Transverse colon (tissue), 4 donors: ENCODE measurements at regions of chr6 and their contacts with region 1.

Region 1: DNA sequence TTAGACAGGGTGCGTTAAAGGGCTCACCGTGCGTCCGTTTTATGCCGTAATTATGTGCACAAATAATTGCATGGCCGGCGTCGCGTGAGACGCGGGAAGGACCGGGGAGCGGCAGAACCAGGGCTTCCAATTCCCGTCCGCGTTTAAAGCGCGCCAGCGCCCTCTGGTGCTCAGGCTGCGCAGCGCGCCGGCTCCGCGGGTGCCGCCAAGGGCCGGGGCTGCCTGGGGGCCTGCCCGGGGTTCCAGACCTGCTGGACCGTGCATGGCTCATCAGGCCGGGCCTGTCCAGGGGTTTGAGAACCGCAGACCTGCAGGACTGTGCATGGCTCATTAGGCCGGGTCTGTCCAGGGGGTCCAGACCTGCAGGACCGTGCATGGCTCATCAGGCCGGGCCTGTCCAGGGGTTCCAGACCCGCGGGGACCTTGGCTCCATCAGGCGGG is 369.0 kb downstream of the THBS2 start:
- DNase-seq: peak; percentile 76
- H3K4me3 ChIP-seq: no peak overlapping the region
- H3K27ac ChIP-seq: no peak overlapping the region
- H3K4me1 ChIP-seq: no peaks in the 10 kb centered on the region
- H3K27me3 ChIP-seq: no peaks in the 10 kb centered on the region
- CTCF ChIP-seq: peak; percentile 87 to 97 (median 94)
- EP300 ChIP-seq: no peak
- POLR2A ChIP-seq: no peak

Region 2: DNA sequence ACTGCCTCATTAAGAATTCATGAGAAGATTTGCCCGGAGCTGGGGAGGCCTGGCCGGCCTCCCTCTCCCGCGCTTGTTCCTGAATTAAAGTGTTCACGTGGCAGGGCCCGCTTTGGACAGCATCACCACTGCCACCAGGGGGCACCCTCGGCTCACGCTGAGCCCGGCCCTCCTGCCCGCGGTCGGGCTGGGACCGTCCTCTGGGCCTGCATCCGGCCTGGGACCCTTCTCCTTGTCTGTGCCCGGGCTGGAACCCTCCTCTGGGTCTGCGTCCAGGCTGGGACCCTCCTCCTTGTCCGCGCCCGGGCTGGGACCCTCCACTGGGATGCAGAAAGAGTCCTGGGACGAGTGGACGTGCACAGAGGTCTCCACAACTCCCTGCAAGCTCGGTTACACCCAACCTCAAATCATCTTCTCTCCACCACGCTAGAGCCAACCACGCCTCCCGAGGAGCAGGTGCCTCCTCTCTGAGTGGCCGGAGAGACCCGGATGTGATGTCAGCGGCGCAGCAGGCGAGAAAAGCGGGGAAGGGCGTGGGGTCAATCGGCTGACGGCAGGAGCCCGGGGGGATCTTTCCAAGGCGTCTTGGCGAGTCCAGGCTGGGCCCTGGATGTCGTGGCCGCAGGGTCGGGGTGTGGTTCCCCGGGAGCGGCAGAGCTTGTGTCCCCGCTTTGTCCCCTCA is 514.2 kb before region 1 on chr6:
- in situ Hi-C with region 1: loop called (anchors 5 to 25 kb)
- intact Hi-C with region 1: loop called (anchors 1 kb)
- DNase-seq: peak; percentile 85
- H3K4me3 ChIP-seq: no peak overlapping the region
- H3K27ac ChIP-seq: no peak overlapping the region
- H3K4me1 ChIP-seq: peaks cover 0 to 7% (median 5%) of the 10 kb centered on the region in 4 donors
- H3K27me3 ChIP-seq: no peaks in the 10 kb centered on the region
- CTCF ChIP-seq: peak; percentile 87 to 93 (median 91)
- EP300 ChIP-seq: no peak
- POLR2A ChIP-seq: no peak

Region 3: DNA sequence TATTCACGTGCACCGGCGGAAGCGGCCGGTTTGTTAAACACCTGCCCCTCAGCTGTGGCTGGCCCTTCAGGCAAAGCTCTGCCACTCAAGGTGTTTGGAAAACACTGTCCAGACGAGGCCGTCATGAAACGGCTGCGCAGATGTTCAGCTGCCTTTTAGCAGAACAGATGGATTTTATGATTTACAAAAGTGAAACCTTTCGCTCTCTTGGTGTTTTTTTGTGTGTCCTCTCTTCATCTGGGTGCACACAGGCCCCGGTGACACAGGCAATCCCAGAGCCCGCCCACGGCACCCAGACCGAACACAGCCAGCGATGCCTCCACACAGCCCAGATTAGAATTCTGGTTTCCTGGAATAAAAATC is 46.6 kb before region 1 on chr6:
- in situ Hi-C with region 1: no loop called
- intact Hi-C with region 1: no loop called
- DNase-seq: no peak
- H3K4me3 ChIP-seq: no peak overlapping the region
- H3K27ac ChIP-seq: no peak overlapping the region
- H3K4me1 ChIP-seq: no peaks in the 10 kb centered on the region
- H3K27me3 ChIP-seq: no peaks in the 10 kb centered on the region
- CTCF ChIP-seq: no peak
- EP300 ChIP-seq: no peak
- POLR2A ChIP-seq: no peak

Region 4: DNA sequence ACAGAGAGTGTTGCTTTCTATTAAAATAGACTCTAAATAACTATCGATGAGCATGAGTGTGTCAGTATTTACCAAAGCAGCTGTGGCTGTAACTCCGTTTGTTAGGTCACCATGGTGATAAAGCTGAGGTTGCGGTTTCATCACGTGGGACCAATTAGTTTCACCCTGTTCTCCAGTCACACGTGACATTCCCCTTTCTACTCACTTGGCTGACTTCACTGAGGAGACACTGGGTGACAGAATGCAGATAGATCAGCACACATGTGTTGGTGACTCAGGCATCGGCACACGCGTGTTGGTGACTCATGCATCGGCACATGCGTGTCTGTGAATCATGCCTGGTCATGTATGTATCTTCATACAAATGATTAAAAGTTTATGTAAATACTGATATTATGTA is 83.6 kb after region 1 on chr6:
- in situ Hi-C with region 1: no loop called
- intact Hi-C with region 1: no loop called
- DNase-seq: peak; percentile 57
- H3K4me3 ChIP-seq: no peak overlapping the region
- H3K27ac ChIP-seq: peak overlapping the region in 2 of 4 donors; percentile 0 to 29
- H3K4me1 ChIP-seq: no peaks in the 10 kb centered on the region
- H3K27me3 ChIP-seq: no peaks in the 10 kb centered on the region
- CTCF ChIP-seq: no peak
- EP300 ChIP-seq: peak; percentile 46
- POLR2A ChIP-seq: no peak